ENCODE measurements at regions of chr13 and their contacts with region 1.

Region 1: GRCh38 chr13:30802953-30803478 is 67.7 kb downstream of the ALOX5AP start:
- DNase-seq: peak; percentile 74
- H3K4me3 ChIP-seq: peak overlapping the region in 1 of 3 experiments; percentile 23
- H3K27ac ChIP-seq: no peak overlapping the region
- H3K4me1 ChIP-seq: peaks cover 28% of the 10 kb centered on the region
- H3K27me3 ChIP-seq: no peaks in the 10 kb centered on the region
- CTCF ChIP-seq: peak; percentile 93 to 94
- POLR2A ChIP-seq: no peak

Region 2: GRCh38 chr13:30408319-30409101 is 394.5 kb before region 1 on chr13:
- CTCF ChIA-PET with region 1: interaction called, 3 read pairs
- POLR2A ChIA-PET with region 1: no interaction called
- dilution Hi-C with region 1: no loop called
- intact Hi-C with region 1: loop called (anchors 1 kb)
- DNase-seq: peak; percentile 94
- H3K4me3 ChIP-seq: no peak overlapping the region
- H3K27ac ChIP-seq: no peak overlapping the region
- H3K4me1 ChIP-seq: peaks cover 3% of the 10 kb centered on the region
- H3K27me3 ChIP-seq: peaks cover 0 to 7% of the 10 kb centered on the region in 2 experiments
- CTCF ChIP-seq: peak; percentile 59 to 83
- POLR2A ChIP-seq: peak; percentile 34

Region 3: GRCh38 chr13:30617315-30618185 is 185.5 kb before region 1 on chr13 and contains the start of gene USPL1:
- CTCF ChIA-PET with region 1: interaction called, 4 read pairs
- POLR2A ChIA-PET with region 1: no interaction called
- dilution Hi-C with region 1: no loop called
- intact Hi-C with region 1: loop called (anchors 1 kb)
- DNase-seq: peak; percentile 100
- H3K4me3 ChIP-seq: peak within 1 kb of the TSS; percentile 83 to 95 (median 95)
- H3K27ac ChIP-seq: peak within 1 kb of the TSS; percentile 87
- H3K4me1 ChIP-seq: peaks cover 36% of the 10 kb centered on the region
- H3K27me3 ChIP-seq: no peaks in the 10 kb centered on the region
- CTCF ChIP-seq: peak in 1 of 2 donors; percentile 31
- POLR2A ChIP-seq: no peak
- total RNA-seq, gene USPL1: 18.8 and 21.0 TPM in 2 replicates

Region 4: GRCh38 chr13:30679483-30680330 is 123.3 kb before region 1 on chr13:
- CTCF ChIA-PET with region 1: interaction called, 11 read pairs
- POLR2A ChIA-PET with region 1: no interaction called
- dilution Hi-C with region 1: loop called (anchors 25 kb)
- intact Hi-C with region 1: loop called (anchors 1 kb)
- DNase-seq: peak; percentile 58
- H3K4me3 ChIP-seq: no peak overlapping the region
- H3K27ac ChIP-seq: no peak overlapping the region
- H3K4me1 ChIP-seq: peaks cover 6% of the 10 kb centered on the region
- H3K27me3 ChIP-seq: no peaks in the 10 kb centered on the region
- CTCF ChIP-seq: peak; percentile 20 to 64
- POLR2A ChIP-seq: no peak

Region 5: DNA sequence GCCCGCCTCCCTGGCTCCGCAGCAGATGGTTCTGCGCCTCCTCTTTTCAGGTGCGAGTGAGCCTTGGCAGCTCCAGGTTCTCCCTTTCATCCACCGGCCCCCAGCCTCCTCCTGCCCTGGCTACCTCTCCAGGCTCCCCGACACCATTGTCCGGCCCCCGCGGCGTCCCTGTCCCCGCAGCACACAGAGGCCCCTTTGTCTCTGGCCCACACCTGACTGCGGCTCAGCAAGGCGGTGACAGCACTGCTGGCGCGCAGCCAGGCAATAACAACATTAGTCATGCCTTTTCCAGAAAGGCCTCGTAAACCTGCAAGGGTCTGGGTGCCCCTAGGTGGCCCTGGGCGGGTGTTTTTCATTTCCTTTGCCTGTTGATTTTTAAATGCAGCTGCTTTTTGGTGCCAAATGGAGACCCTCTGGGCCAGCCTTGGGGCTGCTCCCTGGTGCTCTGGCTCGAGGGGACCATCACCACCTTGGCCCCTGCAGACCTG is 29.9 kb after region 1 on chr13:
- CTCF ChIA-PET with region 1: no interaction called
- POLR2A ChIA-PET with region 1: no interaction called
- dilution Hi-C with region 1: no loop called
- intact Hi-C with region 1: loop called (anchors 1 kb)
- DNase-seq: peak; percentile 75
- H3K4me3 ChIP-seq: no peak overlapping the region
- H3K27ac ChIP-seq: no peak overlapping the region
- H3K4me1 ChIP-seq: peaks cover 30% of the 10 kb centered on the region
- H3K27me3 ChIP-seq: peaks cover 0 to 9% of the 10 kb centered on the region in 2 experiments
- CTCF ChIP-seq: no peak
- POLR2A ChIP-seq: no peak

Region 6: GRCh38 chr13:30905932-30906383 is 102.9 kb after region 1 on chr13 and contains the start of gene MEDAG:
- CTCF ChIA-PET with region 1: no interaction called
- POLR2A ChIA-PET with region 1: no interaction called
- dilution Hi-C with region 1: no loop called
- intact Hi-C with region 1: loop called (anchors 2 kb)
- DNase-seq: peak; percentile 85
- H3K4me3 ChIP-seq: peak within 1 kb of the TSS; percentile 7 to 43 (median 38)
- H3K27ac ChIP-seq: peak within 1 kb of the TSS; percentile 79
- H3K4me1 ChIP-seq: peaks cover 32% of the 10 kb centered on the region
- H3K27me3 ChIP-seq: no peaks in the 10 kb centered on the region
- CTCF ChIP-seq: no peak
- POLR2A ChIP-seq: peak; percentile 67
- total RNA-seq, gene MEDAG: 27.2 and 30.2 TPM in 2 replicates

Measured in endothelial cell of umbilical vein (primary cell).